ENCODE measurements at regions of chr19 and their contacts with region 1.

Region 1: GRCh38 chr19:15288146-15288963 is 44.0 kb downstream of the BRD4 start:
- DNase-seq: peak; percentile 77 to 99 (median 86)

Region 2: DNA sequence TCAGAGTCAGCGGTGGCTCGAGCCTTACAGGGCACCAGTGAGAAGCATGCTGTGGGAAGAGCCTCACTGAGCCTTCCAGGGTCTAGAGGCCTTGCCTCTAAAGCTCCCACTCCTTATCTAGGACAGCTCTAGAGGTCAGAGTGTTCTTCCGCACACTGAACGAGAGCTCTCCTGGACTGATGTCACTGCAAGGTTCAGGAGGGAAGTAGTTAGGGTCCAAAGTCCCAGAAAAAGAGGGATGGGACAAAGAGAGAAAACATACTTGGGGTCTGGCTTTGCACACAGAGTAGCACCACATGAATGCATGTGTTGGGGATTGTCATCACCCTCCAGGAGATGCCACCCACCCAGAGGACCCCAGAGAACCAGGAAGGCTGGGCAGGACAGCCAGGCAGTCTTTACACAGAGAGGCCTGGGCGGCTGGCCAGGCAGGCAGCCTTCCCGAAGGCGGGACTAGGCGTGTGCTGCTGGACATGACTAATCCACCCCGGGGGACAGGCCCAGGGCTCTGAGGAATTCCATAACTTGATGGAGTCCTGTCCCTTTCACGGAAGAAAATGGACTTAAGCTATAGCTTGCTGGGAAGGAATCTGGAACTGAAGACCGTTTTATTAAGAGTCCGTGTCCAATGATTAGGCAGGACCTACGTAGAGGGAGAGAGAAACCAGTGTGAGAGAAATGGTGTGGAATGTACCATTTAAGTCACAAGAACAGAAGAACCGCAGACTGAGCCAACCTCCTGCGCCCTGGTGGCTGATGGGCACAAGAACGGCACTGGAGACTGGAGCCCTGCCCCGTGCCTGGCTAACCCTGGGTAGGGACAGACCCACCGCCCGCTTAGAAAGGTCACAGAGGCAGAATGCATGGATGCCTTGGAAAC is 39.5 kb before region 1 on chr19:
- intact Hi-C with region 1: no loop called
- DNase-seq: peak in 4 of 10 donors; percentile 41 to 92 (median 68)

Region 3: DNA sequence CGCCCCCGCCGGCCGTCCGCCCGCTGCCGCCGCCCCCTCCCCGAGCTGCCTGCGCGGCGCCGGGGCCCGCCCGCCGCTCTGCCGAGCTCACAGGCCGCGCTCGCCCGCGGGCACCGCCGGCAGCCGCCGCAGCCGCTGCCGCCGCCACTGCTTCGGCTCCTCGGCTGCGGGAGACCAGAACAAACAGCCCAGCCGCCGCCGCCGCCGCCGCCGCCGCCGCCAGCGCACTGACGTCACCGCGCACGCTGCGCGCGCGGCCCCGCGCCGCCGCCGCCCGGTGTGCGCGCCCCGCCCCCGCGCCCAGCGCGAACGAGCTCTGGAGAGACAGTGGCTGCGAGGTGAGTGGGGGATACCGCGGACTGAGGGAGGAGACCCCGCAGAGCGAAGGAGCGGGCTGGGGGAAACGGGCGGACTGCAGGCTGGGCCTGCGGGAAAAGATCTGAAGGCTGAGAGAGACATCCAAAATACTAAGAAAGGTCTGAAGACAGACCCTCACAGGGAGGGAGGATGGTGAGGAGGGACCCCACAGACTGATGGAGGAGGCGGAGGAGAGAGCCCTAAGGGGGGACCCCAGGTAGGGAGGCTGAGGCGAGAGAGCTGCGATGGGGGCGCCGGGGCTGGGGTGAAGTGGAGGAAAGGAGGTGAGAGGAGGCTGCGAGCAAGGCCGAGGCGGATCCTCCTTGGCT is 44.1 kb after region 1 on chr19 and contains the start of gene BRD4:
- intact Hi-C with region 1: loop called (anchors 2 kb)
- DNase-seq: peak; percentile 50 to 95 (median 68)

Measured in posterior cingulate gyrus (tissue), 11 donors.